ENCODE measurements at regions of chr19 and their contacts with region 1.

Region 1: DNA sequence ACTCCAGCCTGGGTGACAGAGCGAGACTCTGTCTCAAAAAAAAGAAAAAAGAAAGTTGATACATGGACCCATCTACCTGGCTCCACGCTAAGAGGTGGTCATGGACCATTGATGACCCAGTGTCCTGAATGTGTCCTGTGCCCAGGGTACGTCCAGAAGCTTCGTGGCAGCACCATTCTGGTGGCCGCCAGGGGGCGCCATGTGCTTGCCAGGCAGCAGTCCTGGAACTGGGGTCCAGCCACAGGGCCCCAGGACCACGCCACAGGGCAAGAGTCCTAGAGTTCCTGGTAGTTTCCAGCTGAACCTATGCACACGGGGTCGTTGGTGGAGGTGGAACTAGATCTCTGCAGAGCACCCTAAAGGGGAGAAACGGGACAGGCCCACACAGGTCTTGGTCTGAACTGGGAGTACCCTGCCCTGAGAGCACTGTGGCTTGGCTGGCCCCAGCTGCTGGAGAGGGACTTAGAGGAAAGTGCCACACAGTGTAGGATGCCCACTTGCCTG is 19.9 kb upstream of the FBXO27 start:
- DNase-seq: peak; percentile 33
- H3K4me3 ChIP-seq: no peak overlapping the region
- H3K27ac ChIP-seq: no peak overlapping the region
- H3K4me1 ChIP-seq: no peaks in the 10 kb centered on the region
- H3K27me3 ChIP-seq: no peaks in the 10 kb centered on the region
- CTCF ChIP-seq: peak; percentile 79 to 86

Region 2: GRCh38 chr19:38899447-38900219 is 152.7 kb before region 1 on chr19 and contains the starts of genes NFKBIB and SIRT2:
- CTCF ChIA-PET with region 1: no interaction called
- dilution Hi-C with region 1: no loop called
- in situ Hi-C with region 1: no loop called
- intact Hi-C with region 1: no loop called
- DNase-seq: peak; percentile 100
- H3K4me3 ChIP-seq: peak within 1 kb of the TSS; percentile 84 to 93 (median 93)
- H3K27ac ChIP-seq: peak within 1 kb of the TSS; percentile 96
- H3K4me1 ChIP-seq: peaks cover 13% of the 10 kb centered on the region
- H3K27me3 ChIP-seq: no peaks in the 10 kb centered on the region
- CTCF ChIP-seq: no peak
- total RNA-seq, gene NFKBIB: 9.5 to 27.2 TPM
- total RNA-seq, gene SIRT2: 43.3 to 65.3 TPM

Region 3: DNA sequence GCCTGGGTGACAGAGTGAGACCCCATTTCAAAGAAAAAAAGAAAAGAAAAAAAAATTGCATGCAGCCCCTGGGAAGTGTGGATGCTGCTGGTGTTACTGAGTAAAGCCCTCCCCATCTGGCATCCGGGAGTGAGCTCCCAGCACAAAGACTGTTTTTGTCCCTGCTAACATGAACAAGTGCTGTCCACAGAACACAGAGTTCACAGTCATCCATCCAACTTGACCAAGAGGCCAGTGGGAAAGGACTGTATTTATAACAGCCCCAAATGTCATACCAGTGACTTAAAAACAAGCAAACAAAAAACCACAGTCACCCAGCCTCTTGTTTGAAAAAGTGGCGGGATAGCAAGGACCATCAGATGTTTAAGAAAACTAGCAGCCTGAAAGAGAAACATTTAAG is 87.6 kb before region 1 on chr19:
- CTCF ChIA-PET with region 1: no interaction called
- dilution Hi-C with region 1: no loop called
- in situ Hi-C with region 1: no loop called
- intact Hi-C with region 1: loop called (anchors 1 kb)
- DNase-seq: no peak
- H3K4me3 ChIP-seq: no peak overlapping the region
- H3K27ac ChIP-seq: no peak overlapping the region
- H3K4me1 ChIP-seq: peaks cover 4% of the 10 kb centered on the region
- H3K27me3 ChIP-seq: no peaks in the 10 kb centered on the region
- CTCF ChIP-seq: no peak

Region 4: GRCh38 chr19:39083983-39084731 is 31.9 kb after region 1 on chr19 and contains the start of gene ACP7:
- CTCF ChIA-PET with region 1: no interaction called
- dilution Hi-C with region 1: no loop called
- in situ Hi-C with region 1: no loop called
- intact Hi-C with region 1: loop called (anchors 1 kb)
- DNase-seq: no peak
- H3K4me3 ChIP-seq: peak within 1 kb of the TSS; percentile 62 to 78 (median 76)
- H3K27ac ChIP-seq: peak within 1 kb of the TSS; percentile 66
- H3K4me1 ChIP-seq: peaks cover 28% of the 10 kb centered on the region
- H3K27me3 ChIP-seq: no peaks in the 10 kb centered on the region
- CTCF ChIP-seq: no peak
- total RNA-seq, gene ACP7: 3.3 to 4.4 TPM

Region 5: GRCh38 chr19:39098365-39099269 is 46.3 kb after region 1 on chr19:
- CTCF ChIA-PET with region 1: no interaction called
- dilution Hi-C with region 1: no loop called
- in situ Hi-C with region 1: no loop called
- intact Hi-C with region 1: no loop called
- DNase-seq: no peak
- H3K4me3 ChIP-seq: no peak overlapping the region
- H3K27ac ChIP-seq: no peak overlapping the region
- H3K4me1 ChIP-seq: no peaks in the 10 kb centered on the region
- H3K27me3 ChIP-seq: no peaks in the 10 kb centered on the region
- CTCF ChIP-seq: no peak

Region 6: GRCh38 chr19:39187559-39187957 is 135.3 kb after region 1 on chr19:
- CTCF ChIA-PET with region 1: no interaction called
- dilution Hi-C with region 1: no loop called
- in situ Hi-C with region 1: no loop called
- intact Hi-C with region 1: loop called (anchors 5 kb)
- DNase-seq: no peak
- H3K4me3 ChIP-seq: no peak overlapping the region
- H3K27ac ChIP-seq: no peak overlapping the region
- H3K4me1 ChIP-seq: no peaks in the 10 kb centered on the region
- H3K27me3 ChIP-seq: no peaks in the 10 kb centered on the region
- CTCF ChIP-seq: no peak

Region 7: GRCh38 chr19:39328046-39328705 is 275.9 kb after region 1 on chr19:
- CTCF ChIA-PET with region 1: no interaction called
- dilution Hi-C with region 1: no loop called
- in situ Hi-C with region 1: no loop called
- intact Hi-C with region 1: loop called (anchors 1 kb)
- DNase-seq: peak; percentile 47
- H3K4me3 ChIP-seq: no peak overlapping the region
- H3K27ac ChIP-seq: no peak overlapping the region
- H3K4me1 ChIP-seq: no peaks in the 10 kb centered on the region
- H3K27me3 ChIP-seq: no peaks in the 10 kb centered on the region
- CTCF ChIP-seq: peak; percentile 94 to 96